H1 (cell line): ENCODE measurements at regions of chr9 and their contacts with region 1.

Region 1: GRCh38 chr9:83937911-83938323 is 16.7 kb upstream of the KIF27 start:
- DNase-seq: peak in 1 of 2 experiments; percentile 47
- H3K4me3 ChIP-seq: no peak overlapping the region
- H3K27ac ChIP-seq: no peak overlapping the region
- H3K4me1 ChIP-seq: peaks cover 0 to 6% (median 2%) of the 10 kb centered on the region in 4 experiments; a peak in 4 of 7 replicates
- H3K27me3 ChIP-seq: no peaks in the 10 kb centered on the region
- CTCF ChIP-seq: peak in 2 of 3 experiments; percentile 66 to 72; a peak in 3 of 4 replicates
- EP300 ChIP-seq: no peak
- POLR2A ChIP-seq: no peak
- RAD21 ChIP-seq: peak; percentile 85 to 94

Region 2: DNA sequence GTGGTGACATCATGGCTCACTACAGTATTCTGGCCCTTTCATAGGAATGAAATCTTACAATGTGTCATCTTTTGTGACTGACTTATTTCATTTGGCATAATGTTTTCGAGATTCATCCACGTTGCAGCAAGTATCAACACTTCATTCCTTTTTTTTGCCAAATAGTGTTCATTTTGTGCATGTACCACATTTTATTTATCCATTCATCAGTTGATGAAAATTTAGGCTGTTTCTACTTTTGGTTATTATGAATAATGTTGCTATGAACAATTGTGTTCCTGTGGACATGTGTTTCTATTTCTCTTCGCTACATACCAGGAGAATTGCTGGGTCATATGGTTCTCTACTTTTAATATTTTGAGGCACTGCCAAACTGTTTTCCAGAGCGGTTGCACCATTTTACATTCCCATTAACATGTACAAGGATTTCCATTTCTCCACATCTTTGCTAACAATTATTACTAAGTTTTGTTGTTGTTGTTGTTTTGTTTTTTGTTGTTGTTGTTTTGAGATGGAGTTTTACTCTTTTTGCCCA is 86.2 kb after region 1 on chr9:
- CTCF ChIA-PET with region 1: no interaction called
- POLR2A ChIA-PET with region 1: no interaction called
- DNase-seq: no peak
- H3K4me3 ChIP-seq: no peak overlapping the region
- H3K27ac ChIP-seq: no peak overlapping the region
- H3K4me1 ChIP-seq: no peaks in the 10 kb centered on the region
- H3K27me3 ChIP-seq: no peaks in the 10 kb centered on the region
- CTCF ChIP-seq: no peak
- EP300 ChIP-seq: no peak
- POLR2A ChIP-seq: no peak
- RAD21 ChIP-seq: no peak

Region 3: DNA sequence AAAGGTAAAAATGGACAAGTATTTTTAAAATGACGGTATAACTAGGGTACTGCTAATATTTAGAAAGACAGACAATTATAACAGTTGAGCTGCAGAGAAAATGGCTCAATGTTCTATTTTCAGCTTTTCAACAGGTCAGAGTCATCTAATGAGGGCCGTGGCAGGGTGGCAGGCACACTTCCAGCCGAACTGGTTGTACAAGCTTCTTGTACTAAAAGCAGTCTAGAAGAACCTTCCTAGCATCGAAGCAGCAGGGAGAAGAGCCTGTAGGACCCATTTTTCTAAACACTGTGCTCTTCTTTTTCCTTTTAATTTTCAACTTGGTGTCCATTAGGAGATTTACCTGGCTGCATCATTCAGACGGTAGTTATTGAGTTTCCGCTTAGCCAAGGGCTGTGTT is 317.1 kb after region 1 on chr9:
- CTCF ChIA-PET with region 1: interaction called, 17 read pairs
- POLR2A ChIA-PET with region 1: no interaction called
- DNase-seq: no peak
- H3K4me3 ChIP-seq: no peak overlapping the region
- H3K27ac ChIP-seq: no peak overlapping the region
- H3K4me1 ChIP-seq: no peaks in the 10 kb centered on the region; a peak in 2 of 7 replicates
- H3K27me3 ChIP-seq: no peaks in the 10 kb centered on the region
- CTCF ChIP-seq: no peak
- EP300 ChIP-seq: no peak
- POLR2A ChIP-seq: no peak
- RAD21 ChIP-seq: no peak

Region 4: GRCh38 chr9:84261082-84261746 is 323.3 kb after region 1 on chr9:
- CTCF ChIA-PET with region 1: interaction called, 17 read pairs
- POLR2A ChIA-PET with region 1: no interaction called
- DNase-seq: peak; percentile 73 to 83
- H3K4me3 ChIP-seq: no peak overlapping the region
- H3K27ac ChIP-seq: no peak overlapping the region
- H3K4me1 ChIP-seq: no peaks in the 10 kb centered on the region; a peak in 2 of 7 replicates
- H3K27me3 ChIP-seq: no peaks in the 10 kb centered on the region
- CTCF ChIP-seq: peak; percentile 92 to 96 (median 95)
- EP300 ChIP-seq: no peak
- POLR2A ChIP-seq: no peak
- RAD21 ChIP-seq: peak; percentile 98

Region 5: GRCh38 chr9:84315278-84315877 is 377.5 kb after region 1 on chr9:
- CTCF ChIA-PET with region 1: interaction called, 13 read pairs
- POLR2A ChIA-PET with region 1: interaction called, 3 read pairs
- DNase-seq: peak; percentile 41 to 65
- H3K4me3 ChIP-seq: no peak overlapping the region
- H3K27ac ChIP-seq: no peak overlapping the region
- H3K4me1 ChIP-seq: no peaks in the 10 kb centered on the region; a peak in 1 of 7 replicates
- H3K27me3 ChIP-seq: no peaks in the 10 kb centered on the region
- CTCF ChIP-seq: peak; percentile 12 to 71 (median 66)
- EP300 ChIP-seq: no peak
- POLR2A ChIP-seq: no peak
- RAD21 ChIP-seq: peak; percentile 75 to 81